ENCODE measurements at regions of chr3 and their contacts with region 1.

Region 1: GRCh38 chr3:15815696-15816095 is 17.9 kb upstream of the ANKRD28 start:
- DNase-seq: peak; percentile 30
- ATAC-seq: no peak
- H3K4me3 ChIP-seq: no peak overlapping the region
- H3K27ac ChIP-seq: no peak overlapping the region
- H3K4me1 ChIP-seq: no peaks in the 10 kb centered on the region
- H3K27me3 ChIP-seq: no peaks in the 10 kb centered on the region
- CTCF ChIP-seq: peak; percentile 31; the same call in 1 of the 2 replicates
- EP300 ChIP-seq: no peak
- POLR2A ChIP-seq: no peak
- RAD21 ChIP-seq: no peak

Region 2: DNA sequence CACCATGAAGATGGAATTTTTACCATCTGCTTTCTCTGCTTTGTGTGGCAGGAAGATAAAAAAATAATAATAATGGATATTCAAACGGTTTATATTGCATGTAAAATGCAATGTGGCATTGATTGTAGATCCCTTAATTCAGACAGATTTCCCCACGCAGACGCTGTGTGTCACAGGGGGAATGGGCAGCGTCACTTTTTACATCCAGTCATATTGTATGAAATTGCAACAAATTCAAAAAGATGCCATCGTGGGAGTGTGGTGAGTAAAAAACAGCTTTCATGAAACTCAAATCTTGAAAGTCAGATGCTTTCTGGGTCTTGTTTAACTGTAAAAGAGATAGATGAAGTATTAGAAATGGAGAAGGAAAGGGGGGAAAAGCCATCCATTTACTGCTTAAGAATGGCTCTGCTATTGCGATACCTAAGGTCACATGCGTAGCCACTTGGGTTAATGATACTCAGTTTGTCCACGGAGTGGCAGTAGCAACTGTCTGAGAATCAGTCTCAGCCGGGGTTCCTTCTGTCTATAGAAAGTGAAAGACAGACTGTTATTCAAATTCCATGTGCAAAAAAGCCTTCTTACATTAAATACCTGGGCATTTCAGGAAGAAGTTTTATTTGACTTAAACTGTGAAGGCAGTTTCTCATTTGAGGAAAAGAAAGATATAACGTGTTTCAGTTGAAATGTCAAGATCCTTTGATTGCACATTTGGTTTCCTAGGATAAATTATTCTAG is 185.7 kb before region 1 on chr3:
- CTCF ChIA-PET with region 1: no interaction called
- POLR2A ChIA-PET with region 1: no interaction called
- in situ Hi-C with region 1: no loop called
- intact Hi-C with region 1: loop called (anchors 2 kb)
- DNase-seq: peak; percentile 62
- ATAC-seq: peak; percentile 98
- H3K4me3 ChIP-seq: no peak overlapping the region
- H3K27ac ChIP-seq: no peak overlapping the region
- H3K4me1 ChIP-seq: peaks cover 13% of the 10 kb centered on the region
- H3K27me3 ChIP-seq: no peaks in the 10 kb centered on the region
- CTCF ChIP-seq: peak; percentile 77
- EP300 ChIP-seq: no peak
- POLR2A ChIP-seq: no peak
- RAD21 ChIP-seq: peak; percentile 55

Region 3: DNA sequence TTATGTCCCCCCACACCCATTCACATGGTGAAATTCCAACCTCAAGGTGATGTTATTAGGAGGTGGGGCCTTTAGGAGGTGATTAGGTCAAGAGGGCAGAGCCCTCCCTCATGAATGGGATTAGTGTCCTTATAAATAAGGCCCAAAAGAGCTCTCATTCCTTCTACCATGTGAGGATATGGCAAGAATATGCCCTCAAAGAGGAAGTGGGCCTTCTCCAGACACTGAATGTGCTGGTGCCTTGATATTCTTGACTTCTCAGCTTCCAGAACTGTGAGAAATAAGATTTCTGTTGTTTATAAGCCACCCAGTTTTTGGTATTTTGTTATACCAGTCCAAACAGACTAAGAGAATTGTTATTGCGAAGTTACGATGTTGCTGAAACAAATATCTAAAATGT is 112.3 kb before region 1 on chr3:
- CTCF ChIA-PET with region 1: no interaction called
- POLR2A ChIA-PET with region 1: no interaction called
- in situ Hi-C with region 1: no loop called
- intact Hi-C with region 1: no loop called
- DNase-seq: no peak
- ATAC-seq: no peak
- H3K4me3 ChIP-seq: no peak overlapping the region
- H3K27ac ChIP-seq: no peak overlapping the region
- H3K4me1 ChIP-seq: no peaks in the 10 kb centered on the region
- H3K27me3 ChIP-seq: no peaks in the 10 kb centered on the region
- CTCF ChIP-seq: no peak
- EP300 ChIP-seq: no peak
- POLR2A ChIP-seq: no peak
- RAD21 ChIP-seq: no peak

Region 4: DNA sequence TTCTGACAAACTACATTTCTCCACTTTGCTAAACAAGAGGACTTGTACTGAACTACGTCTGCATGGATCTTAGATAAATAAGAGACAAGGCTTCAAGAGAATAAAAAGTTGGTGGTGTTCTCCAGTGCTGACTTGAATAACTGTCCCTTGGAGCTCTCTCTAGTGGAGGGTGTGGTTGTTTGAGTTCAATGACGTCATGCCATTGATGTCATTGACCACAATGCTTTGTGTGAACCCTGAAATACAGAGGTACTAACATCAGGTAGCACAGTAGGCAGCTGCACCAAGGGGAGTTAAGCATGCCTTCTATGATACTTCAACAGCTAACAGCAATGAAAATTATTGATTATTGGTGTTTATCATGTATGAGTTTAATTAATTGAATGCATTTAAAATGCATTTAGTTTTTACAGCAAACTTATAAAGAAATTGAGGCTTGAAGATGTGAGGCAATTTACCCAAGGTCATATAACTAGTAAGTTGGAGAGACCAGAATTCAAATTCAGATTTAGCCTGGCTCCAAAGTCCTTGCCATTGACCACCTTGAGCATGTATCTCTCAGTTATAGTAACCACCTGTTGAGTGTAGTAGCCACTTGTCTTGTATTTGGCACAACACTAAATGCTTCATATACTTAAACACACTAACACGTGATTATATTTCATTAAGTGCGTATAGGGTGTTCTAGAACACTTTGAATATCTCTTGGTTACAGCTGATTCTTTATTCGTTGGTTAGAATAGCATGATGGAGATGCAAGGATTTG is 108.1 kb after region 1 on chr3:
- CTCF ChIA-PET with region 1: no interaction called
- POLR2A ChIA-PET with region 1: no interaction called
- in situ Hi-C with region 1: no loop called
- intact Hi-C with region 1: no loop called
- DNase-seq: no peak
- ATAC-seq: no peak
- H3K4me3 ChIP-seq: no peak overlapping the region
- H3K27ac ChIP-seq: no peak overlapping the region
- H3K4me1 ChIP-seq: no peaks in the 10 kb centered on the region
- H3K27me3 ChIP-seq: no peaks in the 10 kb centered on the region; a peak in 1 of 5 replicates
- CTCF ChIP-seq: no peak
- EP300 ChIP-seq: no peak
- POLR2A ChIP-seq: no peak
- RAD21 ChIP-seq: no peak

Region 5: DNA sequence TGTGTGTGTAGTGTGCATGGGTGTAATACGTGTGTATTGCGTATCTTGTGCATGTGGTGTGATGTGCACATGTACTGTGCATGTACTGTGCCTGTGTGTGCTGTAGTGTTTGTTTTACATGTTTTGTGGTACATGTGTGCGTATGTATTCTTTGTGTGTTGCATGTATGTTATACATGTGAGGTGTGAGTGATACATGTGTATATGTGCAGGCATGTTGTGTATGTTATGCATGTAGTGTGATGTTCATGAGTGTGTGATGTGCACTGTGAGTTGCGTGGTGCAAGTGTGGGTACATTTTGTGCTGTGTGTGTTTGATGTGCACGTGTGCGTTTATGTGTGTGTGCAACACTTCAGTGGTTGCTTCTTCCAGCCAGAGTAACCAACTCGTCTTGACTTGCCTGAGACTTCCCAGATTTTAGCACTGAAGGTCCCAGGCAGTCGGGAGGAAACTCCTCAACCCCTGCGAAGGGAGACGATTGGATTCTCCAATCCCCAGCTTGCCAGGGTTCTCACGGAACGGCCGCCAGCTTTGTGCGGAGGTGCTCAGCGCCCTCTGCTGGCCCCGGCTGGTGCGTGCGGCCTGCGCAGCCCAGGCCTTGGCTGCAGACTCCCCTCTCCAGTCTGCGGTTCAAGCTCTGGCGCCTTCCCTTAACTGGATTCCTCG is 362.4 kb after region 1 on chr3:
- CTCF ChIA-PET with region 1: no interaction called
- POLR2A ChIA-PET with region 1: no interaction called
- in situ Hi-C with region 1: no loop called
- intact Hi-C with region 1: loop called (anchors 5 kb)
- DNase-seq: peak; percentile 42
- ATAC-seq: peak; percentile 90
- H3K4me3 ChIP-seq: no peak overlapping the region
- H3K27ac ChIP-seq: no peak overlapping the region
- H3K4me1 ChIP-seq: peaks cover 19% of the 10 kb centered on the region
- H3K27me3 ChIP-seq: peaks cover 3 to 56% of the 10 kb centered on the region in 2 experiments; a peak in 3 of 5 replicates
- CTCF ChIP-seq: peak; percentile 98
- EP300 ChIP-seq: no peak
- POLR2A ChIP-seq: no peak
- RAD21 ChIP-seq: peak; percentile 96